G401 (cell line): ENCODE measurements at regions of chr1 and their contacts with region 1.

Region 1: DNA sequence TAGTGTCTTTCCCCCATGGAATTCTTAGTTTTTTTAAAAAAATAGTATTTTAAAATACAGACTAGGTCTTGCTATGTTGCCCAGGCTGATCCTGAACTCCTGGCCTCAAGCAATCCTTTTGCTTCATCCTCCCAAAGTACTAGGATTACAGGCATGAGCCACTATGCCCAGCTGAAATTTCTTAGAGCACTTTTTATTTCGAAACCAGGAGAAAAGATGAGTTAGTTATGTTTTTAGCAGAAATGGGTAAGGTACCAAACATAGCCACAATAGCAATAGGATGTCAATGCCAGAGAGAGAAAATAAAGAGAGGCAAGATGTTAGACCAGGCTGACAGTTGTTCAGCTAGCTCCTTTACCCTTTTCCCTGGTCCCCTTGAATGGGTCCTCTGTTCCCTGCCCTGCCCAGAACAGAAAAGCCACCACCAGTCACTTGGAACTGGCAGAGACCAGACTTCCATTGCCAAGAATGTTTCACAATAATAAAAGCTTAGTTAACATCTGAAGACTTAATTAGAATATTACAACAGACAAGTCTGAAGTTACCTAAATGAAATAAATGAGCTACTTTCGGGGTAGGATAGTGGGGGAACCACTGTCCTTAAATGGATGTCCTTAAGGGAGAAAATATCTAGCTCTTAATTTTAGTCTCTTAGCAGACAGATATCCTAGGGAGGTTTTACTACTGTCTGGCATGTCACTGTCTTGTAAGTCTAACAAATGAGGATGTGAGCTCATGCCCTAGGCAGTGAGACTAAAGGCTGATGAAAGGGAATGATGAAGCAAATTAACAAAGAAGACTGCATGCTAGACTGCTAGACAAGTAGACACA is 54.3 kb downstream of the ABL2 start:
- DNase-seq: peak; percentile 34

Region 2: DNA sequence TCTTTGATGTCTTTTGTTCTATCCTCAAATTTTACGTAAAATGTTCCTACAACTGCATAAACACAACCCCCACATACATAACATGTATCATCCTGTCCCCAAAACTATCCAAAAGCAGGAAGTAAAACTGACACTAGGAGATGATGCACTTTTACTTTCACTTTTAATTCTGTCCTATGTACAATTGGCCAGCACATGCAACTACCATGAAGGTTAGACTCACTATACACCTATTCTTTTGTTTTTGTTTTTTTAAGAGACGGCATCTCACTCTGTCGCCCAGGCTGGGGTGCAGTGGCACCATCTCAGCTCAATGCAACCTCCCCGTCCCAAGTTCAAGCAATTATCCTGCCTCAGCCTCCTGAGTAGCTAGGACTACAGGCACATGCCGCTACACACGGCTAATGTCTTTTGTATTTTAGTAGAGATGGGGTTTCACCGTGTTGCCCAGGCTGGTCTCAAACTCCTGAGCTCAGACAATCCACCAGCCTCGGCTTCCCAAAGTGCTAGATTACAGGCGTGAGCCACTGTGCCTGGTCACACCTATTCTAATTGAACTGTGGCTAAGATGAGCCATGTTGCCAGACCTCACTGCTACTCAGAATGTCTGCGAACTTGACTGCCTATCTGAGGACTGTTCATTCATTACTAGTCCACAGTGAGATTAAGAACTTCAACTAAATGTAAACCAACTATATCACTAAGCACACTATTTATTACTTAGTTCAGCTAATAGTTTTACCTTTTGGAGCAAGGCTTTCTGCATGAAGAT is 45.3 kb before region 1 on chr1:
- in situ Hi-C with region 1: loop called (anchors 5 kb)
- DNase-seq: no peak

Region 3: DNA sequence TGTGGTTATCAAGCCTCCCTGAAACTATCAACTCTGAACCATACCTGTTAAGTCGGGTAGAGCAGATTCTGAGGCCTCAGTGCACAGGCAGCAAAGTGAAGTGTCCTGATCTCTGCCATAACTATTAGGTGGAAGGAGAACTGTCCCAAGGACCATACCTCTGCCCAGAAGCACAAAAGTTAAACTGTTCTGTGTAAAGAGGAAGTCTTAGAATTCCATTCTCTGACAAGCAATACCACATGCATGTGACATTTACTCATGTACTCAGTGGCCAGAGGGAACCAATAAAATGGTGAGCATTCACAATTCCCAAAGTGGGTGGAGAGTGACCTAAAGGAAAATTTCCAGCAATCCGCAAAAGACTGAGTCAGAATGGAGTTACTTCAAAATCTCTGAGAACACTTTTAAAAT is 32.3 kb before region 1 on chr1:
- in situ Hi-C with region 1: no loop called
- DNase-seq: peak; percentile 25

Region 4: GRCh38 chr1:179217943-179218507 is 42.8 kb after region 1 on chr1:
- in situ Hi-C with region 1: no loop called
- DNase-seq: no peak